ENCODE measurements at regions of chr10 and their contacts with region 1.

Region 1: DNA sequence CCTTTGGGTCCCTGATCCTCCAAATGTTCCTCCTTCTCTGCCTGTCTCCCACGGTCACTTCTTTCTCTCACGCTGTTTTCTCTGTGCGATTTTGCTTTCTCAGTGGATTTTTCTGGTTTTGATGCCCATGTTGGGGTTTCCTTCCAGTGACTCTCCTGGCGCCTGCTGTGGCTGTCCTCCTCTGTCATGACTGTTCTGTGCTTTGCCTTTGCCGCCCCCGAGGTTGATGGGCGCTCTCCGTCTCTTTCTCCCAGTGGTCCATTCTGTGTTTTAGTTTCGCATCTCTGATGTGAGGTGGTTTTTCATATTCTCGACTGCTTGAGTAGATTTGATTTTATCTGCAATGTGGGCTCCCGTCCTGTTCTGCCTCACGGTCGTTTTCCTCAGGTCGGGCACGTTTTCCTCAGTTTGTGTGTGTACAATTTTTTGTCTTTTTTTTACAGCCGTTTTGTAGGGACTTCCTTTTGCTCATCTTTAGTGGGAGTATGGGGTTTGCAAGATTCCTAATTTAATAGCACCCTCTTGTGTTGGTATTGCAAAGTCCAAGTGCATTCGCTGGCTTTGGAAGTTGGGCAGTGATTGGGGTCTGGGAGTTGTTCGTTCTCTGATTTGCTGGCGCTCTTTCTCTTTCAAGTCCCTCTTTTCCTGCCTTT is 100.0 kb downstream of the INPP5A start:
- DNase-seq: no peak
- ATAC-seq: peak in 7 of 8 donors; percentile 64 to 85 (median 76)
- H3K4me3 ChIP-seq: no peak overlapping the region
- H3K27ac ChIP-seq: no peak overlapping the region
- H3K4me1 ChIP-seq: peaks cover 20 to 72% (median 36%) of the 10 kb centered on the region in 9 donors
- H3K27me3 ChIP-seq: no peaks in the 10 kb centered on the region
- CTCF ChIP-seq: peak; percentile 66 to 85 (median 76)

Region 2: DNA sequence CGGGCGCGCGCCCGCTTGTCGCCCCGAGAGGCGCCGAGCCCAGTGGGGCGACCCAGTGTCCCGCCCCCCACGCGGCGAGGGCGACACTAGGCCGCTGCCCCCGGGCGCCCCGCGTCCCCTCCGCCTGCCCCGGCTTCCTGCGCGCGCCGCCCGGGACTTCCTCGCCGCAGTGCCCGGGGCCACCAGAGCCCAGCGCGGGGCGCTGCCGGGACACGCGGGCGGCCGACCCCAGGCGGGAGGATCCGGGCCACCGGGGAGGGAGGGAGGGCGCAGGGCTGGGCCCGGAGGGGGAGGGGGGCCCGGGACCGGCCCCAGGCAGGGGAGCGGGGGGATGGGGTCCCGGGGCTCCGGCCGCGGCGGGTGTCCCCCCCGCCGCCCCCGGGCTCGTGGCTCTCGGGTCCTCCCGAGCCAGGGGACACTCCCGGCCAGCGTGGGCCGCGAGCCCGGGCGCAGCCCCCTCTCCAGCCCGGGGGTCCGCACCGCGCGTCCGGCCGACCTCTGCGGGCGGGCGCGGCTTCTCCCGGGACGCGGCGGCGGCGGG is 241.0 kb before region 1 on chr10:
- intact Hi-C with region 1: loop called in 6 of 10 experiments (anchors 5 to 10 kb)
- DNase-seq: peak; percentile 58 to 73
- ATAC-seq: peak; percentile 7 to 57 (median 43)
- H3K4me3 ChIP-seq: peak overlapping the region; percentile 19 to 94 (median 64)
- H3K27ac ChIP-seq: peak overlapping the region; percentile 93 to 99 (median 97)
- H3K4me1 ChIP-seq: peaks cover 17 to 58% (median 49%) of the 10 kb centered on the region in 9 donors
- H3K27me3 ChIP-seq: no peaks in the 10 kb centered on the region
- CTCF ChIP-seq: peak in 6 of 9 donors; percentile 13 to 48 (median 29)

Region 3: GRCh38 chr10:132458593-132459300 is 178.9 kb before region 1 on chr10:
- intact Hi-C with region 1: loop called (anchors 1 to 5 kb)
- DNase-seq: peak; percentile 46 to 73
- ATAC-seq: peak; percentile 41 to 71 (median 57)
- H3K4me3 ChIP-seq: no peak overlapping the region
- H3K27ac ChIP-seq: no peak overlapping the region
- H3K4me1 ChIP-seq: peaks cover 14 to 41% (median 33%) of the 10 kb centered on the region in 9 donors
- H3K27me3 ChIP-seq: peaks cover 0 to 14% (median 6%) of the 10 kb centered on the region in 7 donors
- CTCF ChIP-seq: peak; percentile 91 to 99 (median 97)

Region 4: GRCh38 chr10:132506711-132507408 is 130.7 kb before region 1 on chr10:
- intact Hi-C with region 1: loop called in 4 of 10 experiments (anchors 2 to 10 kb)
- DNase-seq: no peak
- ATAC-seq: peak in 6 of 8 donors; percentile 6 to 62 (median 23)
- H3K4me3 ChIP-seq: no peak overlapping the region
- H3K27ac ChIP-seq: peak overlapping the region in 7 of 10 donors; percentile 25 to 74 (median 66)
- H3K4me1 ChIP-seq: peaks cover 9 to 65% (median 36%) of the 10 kb centered on the region in 9 donors
- H3K27me3 ChIP-seq: no peaks in the 10 kb centered on the region
- CTCF ChIP-seq: no peak

Region 5: DNA sequence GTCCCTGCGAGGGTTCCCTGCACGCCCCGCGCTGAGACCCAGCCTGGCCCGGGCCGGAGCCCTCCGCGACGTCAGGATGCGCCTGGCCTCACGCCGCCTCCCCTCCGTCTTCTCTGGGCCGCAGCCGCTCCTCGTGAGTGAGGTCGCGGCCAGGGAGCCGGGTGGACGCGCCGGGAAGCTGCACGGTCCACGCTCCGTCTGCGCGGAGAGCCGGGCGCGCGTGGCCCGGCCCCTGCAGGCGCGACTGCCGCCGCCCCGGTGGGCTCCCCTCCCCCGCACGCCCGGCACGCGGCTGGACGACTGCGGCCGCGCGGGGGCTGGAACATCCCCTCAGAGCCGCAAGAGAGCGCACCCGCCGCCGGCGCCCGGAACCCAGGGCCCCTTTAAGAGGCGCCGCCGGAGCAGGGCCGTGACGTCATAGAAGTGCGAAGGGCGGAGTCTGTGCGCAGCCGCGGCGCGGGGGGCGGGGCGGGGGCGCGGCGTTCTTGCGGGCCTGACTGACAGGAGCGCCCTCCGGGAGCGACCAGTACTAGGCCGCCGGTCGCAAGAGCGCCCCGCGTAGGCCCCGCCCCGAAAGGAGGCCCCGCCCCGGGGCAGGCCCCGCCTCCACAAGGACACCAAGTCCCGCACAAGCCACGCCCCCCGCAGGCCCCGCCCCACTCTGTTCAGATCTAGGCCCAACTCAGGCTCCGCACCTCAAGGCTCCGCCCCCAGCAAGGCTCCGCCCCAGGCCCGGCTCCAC is 100.5 kb before region 1 on chr10:
- intact Hi-C with region 1: loop called in 6 of 10 experiments (anchors 2 to 5 kb)
- DNase-seq: peak; percentile 100
- ATAC-seq: peak; percentile 94 to 97 (median 95)
- H3K4me3 ChIP-seq: peak overlapping the region; percentile 52 to 86 (median 72)
- H3K27ac ChIP-seq: peak overlapping the region; percentile 75 to 97 (median 90)
- H3K4me1 ChIP-seq: peaks cover 24 to 56% (median 54%) of the 10 kb centered on the region in 9 donors
- H3K27me3 ChIP-seq: no peaks in the 10 kb centered on the region
- CTCF ChIP-seq: peak; percentile 22 to 65 (median 44)

Region 6: GRCh38 chr10:132571650-132572535 is 65.7 kb before region 1 on chr10:
- intact Hi-C with region 1: no loop called
- DNase-seq: peak in 1 of 2 donors; percentile 64
- ATAC-seq: peak; percentile 44 to 95 (median 81)
- H3K4me3 ChIP-seq: no peak overlapping the region
- H3K27ac ChIP-seq: peak overlapping the region in 9 of 10 donors; percentile 7 to 58 (median 45)
- H3K4me1 ChIP-seq: peaks cover 35 to 56% (median 51%) of the 10 kb centered on the region in 9 donors
- H3K27me3 ChIP-seq: no peaks in the 10 kb centered on the region
- CTCF ChIP-seq: no peak

Measured in heart right ventricle (tissue), 16 donors.